ENCODE measurements at regions of chr5 and their contacts with region 1.

Region 1: DNA sequence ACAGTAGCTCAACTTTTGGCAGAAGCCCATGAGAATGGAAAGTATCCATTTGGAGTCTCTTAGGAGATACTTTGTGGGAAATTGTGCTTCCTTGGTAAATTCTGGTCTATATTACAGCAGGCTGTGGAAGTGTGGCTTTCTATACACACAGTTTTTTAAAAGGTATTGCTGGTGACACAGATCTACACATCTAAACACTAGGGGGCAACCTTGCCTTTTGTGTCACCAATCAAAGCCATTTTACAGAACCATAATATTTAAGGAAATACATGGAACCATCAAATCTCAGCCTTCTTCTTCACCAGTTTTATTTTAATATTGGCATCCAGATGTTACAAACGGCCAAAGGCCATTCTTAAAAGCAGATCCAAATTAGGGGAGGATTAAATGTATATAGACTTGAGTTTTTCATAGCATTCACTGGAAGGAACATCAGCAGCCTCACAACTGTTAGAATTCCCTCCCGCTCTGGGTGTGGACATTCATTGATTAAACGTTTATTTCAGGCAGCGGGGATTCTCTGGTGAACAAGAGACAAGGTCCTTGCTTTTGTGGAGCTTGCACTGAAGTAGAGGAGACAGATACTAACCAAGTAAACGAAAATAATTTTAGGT is 132.4 kb upstream of the EPB41L4A start:
- DNase-seq: peak in 9 of 14 experiments; percentile 3 to 76 (median 25)
- ATAC-seq: peak; percentile 52
- H3K4me3 ChIP-seq: no peak overlapping the region
- H3K4me3 Mint-ChIP-seq: no peak overlapping the region
- H3K27ac ChIP-seq: no peak overlapping the region
- H3K27ac Mint-ChIP-seq: no peak overlapping the region
- H3K4me1 ChIP-seq: no peaks in the 10 kb centered on the region
- H3K4me1 Mint-ChIP-seq: no peaks in the 10 kb centered on the region
- H3K27me3 ChIP-seq: peaks cover 2 to 7% of the 10 kb centered on the region in 2 experiments
- H3K27me3 Mint-ChIP-seq: peaks cover 4% of the 10 kb centered on the region
- CTCF ChIP-seq: peak; percentile 92

Region 2: GRCh38 chr5:112077180-112077579 is 474.3 kb before region 1 on chr5:
- CTCF ChIA-PET with region 1: no interaction called
- POLR2A ChIA-PET with region 1: no interaction called
- intact Hi-C with region 1: no loop called
- DNase-seq: no peak
- ATAC-seq: no peak
- H3K4me3 ChIP-seq: no peak overlapping the region
- H3K4me3 Mint-ChIP-seq: no peak overlapping the region
- H3K27ac ChIP-seq: no peak overlapping the region
- H3K27ac Mint-ChIP-seq: no peak overlapping the region
- H3K4me1 ChIP-seq: no peaks in the 10 kb centered on the region
- H3K4me1 Mint-ChIP-seq: no peaks in the 10 kb centered on the region
- H3K27me3 ChIP-seq: no peaks in the 10 kb centered on the region
- H3K27me3 Mint-ChIP-seq: no peaks in the 10 kb centered on the region
- CTCF ChIP-seq: no peak

Region 3: DNA sequence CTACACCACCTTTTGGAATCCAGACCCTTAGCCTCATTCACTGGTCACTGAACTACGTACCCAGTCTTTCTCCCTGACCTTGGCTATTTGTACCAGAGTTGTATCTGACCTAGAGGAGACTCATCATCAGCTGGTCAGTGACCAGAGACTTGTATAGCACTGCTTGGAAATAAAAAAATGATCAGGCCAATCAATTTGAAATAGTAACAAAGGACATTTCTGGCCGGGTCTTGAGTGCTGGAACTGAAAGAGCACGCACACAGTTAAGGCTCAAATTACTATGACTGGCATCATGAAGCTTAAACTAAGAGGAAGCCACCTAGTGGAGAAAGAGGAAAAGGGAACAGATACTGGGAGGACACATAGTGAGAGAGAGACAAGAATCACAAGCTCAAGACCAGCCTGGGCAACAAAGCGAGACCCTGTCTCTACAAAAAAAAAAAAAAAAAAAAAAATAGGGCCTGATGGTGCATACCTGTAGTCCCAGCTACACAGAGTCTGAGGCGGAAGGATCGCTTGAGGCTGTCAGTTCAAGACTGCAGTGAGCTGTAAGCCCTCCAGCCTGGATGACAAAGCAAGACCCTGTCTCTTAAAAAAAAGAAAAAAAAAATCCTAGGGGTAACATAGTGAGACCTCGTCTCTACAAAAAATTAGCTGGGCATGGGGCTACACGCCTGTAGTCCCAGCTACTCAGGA is 296.7 kb after region 1 on chr5:
- CTCF ChIA-PET with region 1: no interaction called
- POLR2A ChIA-PET with region 1: no interaction called
- intact Hi-C with region 1: loop called (anchors 5 kb)
- DNase-seq: peak in 4 of 14 experiments; percentile 17 to 71 (median 62)
- ATAC-seq: peak; percentile 99
- H3K4me3 ChIP-seq: no peak overlapping the region
- H3K4me3 Mint-ChIP-seq: no peak overlapping the region
- H3K27ac ChIP-seq: no peak overlapping the region
- H3K27ac Mint-ChIP-seq: no peak overlapping the region
- H3K4me1 ChIP-seq: peaks cover 4% of the 10 kb centered on the region
- H3K4me1 Mint-ChIP-seq: peaks cover 4% of the 10 kb centered on the region
- H3K27me3 ChIP-seq: no peaks in the 10 kb centered on the region
- H3K27me3 Mint-ChIP-seq: peaks cover 11% of the 10 kb centered on the region
- CTCF ChIP-seq: peak; percentile 83

Region 4: DNA sequence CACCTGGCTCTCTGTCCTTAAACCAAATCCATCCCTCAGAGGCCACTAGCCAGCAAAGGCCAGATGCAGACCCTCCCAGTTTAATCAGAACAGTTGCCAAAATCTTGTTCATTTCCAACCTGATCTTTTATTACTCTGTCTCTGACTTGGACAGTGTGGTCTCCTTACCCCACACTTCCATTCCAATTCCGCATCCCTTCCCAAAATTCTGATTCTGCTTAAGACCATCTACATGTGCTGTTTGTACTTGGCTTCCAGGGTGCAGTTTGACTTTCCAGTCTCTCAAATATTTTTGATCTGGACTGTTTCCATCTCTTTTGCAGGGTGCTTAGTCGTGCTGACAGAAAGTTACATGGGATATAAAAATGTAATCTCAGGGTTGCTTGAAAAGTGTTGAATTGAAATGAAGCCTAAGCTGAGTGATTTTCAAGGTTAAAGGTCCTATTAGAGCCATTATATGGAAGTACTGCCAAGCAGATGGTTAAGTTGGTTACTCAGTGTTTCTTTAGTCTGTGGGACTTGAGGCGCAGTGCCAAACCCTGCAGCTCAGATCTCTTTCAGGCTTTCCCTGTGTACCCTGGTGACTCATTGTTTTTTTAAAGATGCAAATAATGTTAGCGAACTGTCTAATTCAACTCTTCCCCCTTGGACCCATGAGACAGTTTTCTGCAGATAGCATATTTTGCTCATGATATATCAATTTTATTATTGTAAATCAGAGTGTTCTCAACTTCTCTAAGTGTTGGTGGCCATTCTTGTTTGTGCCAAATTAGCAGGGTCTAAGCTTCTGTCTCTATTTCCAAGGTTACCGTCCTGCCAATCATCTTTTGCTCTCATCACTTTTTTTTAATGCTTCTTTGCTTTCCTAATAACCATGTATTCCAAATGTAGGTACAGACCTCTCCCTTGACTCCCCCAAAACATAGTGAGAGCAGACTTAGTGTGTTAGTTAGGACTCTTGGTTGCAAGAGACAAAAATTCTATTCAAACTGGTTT is 406.9 kb after region 1 on chr5:
- CTCF ChIA-PET with region 1: no interaction called
- POLR2A ChIA-PET with region 1: no interaction called
- intact Hi-C with region 1: loop called (anchors 2 to 5 kb)
- DNase-seq: peak in 1 of 14 experiments; percentile 23
- ATAC-seq: no peak
- H3K4me3 ChIP-seq: no peak overlapping the region
- H3K4me3 Mint-ChIP-seq: no peak overlapping the region
- H3K27ac ChIP-seq: no peak overlapping the region
- H3K27ac Mint-ChIP-seq: no peak overlapping the region
- H3K4me1 ChIP-seq: no peaks in the 10 kb centered on the region
- H3K4me1 Mint-ChIP-seq: peaks cover 5% of the 10 kb centered on the region
- H3K27me3 ChIP-seq: no peaks in the 10 kb centered on the region
- H3K27me3 Mint-ChIP-seq: no peaks in the 10 kb centered on the region
- CTCF ChIP-seq: no peak

Region 5: GRCh38 chr5:113050721-113051382 is 499.3 kb after region 1 on chr5:
- CTCF ChIA-PET with region 1: no interaction called
- POLR2A ChIA-PET with region 1: no interaction called
- intact Hi-C with region 1: no loop called
- DNase-seq: peak in 3 of 14 experiments; percentile 21 to 37 (median 26)
- ATAC-seq: no peak
- H3K4me3 ChIP-seq: no peak overlapping the region
- H3K4me3 Mint-ChIP-seq: no peak overlapping the region
- H3K27ac ChIP-seq: no peak overlapping the region
- H3K27ac Mint-ChIP-seq: no peak overlapping the region
- H3K4me1 ChIP-seq: peaks cover 12% of the 10 kb centered on the region
- H3K4me1 Mint-ChIP-seq: peaks cover 6% of the 10 kb centered on the region
- H3K27me3 ChIP-seq: no peaks in the 10 kb centered on the region
- H3K27me3 Mint-ChIP-seq: no peaks in the 10 kb centered on the region
- CTCF ChIP-seq: no peak